Activated CD4-positive, alpha-beta T cell treated with anti-CD3 and anti-CD28 coated beads, Interleukin-2, amount 10 ng/mL, durations not matched to agents 24 days and 14 days (primary cell): ENCODE measurements at regions of chr9 and their contacts with region 1.

Region 1: GRCh38 chr9:96654443-96655197 is 497 bp downstream of the PRXL2C start:
- DNase-seq: peak; percentile 88
- H3K4me3 Mint-ChIP-seq: peak overlapping the region; percentile 89
- H3K27ac Mint-ChIP-seq: peak overlapping the region; percentile 88
- H3K4me1 Mint-ChIP-seq: peaks cover 12% of the 10 kb centered on the region
- H3K27me3 Mint-ChIP-seq: peaks cover 10% of the 10 kb centered on the region

Region 2: DNA sequence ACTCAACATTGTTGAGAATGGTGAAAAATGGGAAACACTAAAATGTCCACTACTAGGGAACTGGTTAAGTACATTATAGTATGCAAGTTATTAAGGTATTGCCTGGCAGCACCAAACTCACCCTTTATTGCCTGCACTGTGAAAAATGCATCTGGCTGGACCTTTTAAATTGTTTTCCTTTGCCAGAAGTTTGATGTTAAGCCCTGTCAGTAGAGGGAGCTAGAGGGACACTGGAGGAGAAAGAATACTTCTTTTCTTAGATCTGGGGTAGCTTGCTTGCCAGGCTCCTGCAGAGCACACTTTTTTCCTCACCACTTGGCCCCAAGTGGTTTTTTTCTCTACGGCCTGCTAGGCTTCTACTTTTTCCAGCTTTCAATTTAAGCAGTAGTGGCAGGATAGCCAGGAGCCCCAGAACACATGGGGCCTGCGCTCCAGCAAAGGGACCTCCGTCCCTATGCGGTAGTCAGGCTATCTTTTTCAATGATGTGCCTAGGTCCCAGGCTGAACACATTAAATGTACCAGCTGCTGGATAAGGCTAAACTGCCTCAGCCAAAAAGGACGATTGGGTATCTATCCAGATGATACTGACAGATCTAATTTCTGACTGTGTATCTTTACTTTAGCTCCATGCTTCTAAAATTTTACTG is 212.7 kb before region 1 on chr9:
- intact Hi-C with region 1: loop called (anchors 1 kb)
- DNase-seq: peak; percentile 79
- H3K4me3 Mint-ChIP-seq: no peak overlapping the region
- H3K27ac Mint-ChIP-seq: no peak overlapping the region
- H3K4me1 Mint-ChIP-seq: no peaks in the 10 kb centered on the region
- H3K27me3 Mint-ChIP-seq: peaks cover 5% of the 10 kb centered on the region